MCF 10A (cell line): ENCODE measurements at regions of chr6 and their contacts with region 1.

Region 1: DNA sequence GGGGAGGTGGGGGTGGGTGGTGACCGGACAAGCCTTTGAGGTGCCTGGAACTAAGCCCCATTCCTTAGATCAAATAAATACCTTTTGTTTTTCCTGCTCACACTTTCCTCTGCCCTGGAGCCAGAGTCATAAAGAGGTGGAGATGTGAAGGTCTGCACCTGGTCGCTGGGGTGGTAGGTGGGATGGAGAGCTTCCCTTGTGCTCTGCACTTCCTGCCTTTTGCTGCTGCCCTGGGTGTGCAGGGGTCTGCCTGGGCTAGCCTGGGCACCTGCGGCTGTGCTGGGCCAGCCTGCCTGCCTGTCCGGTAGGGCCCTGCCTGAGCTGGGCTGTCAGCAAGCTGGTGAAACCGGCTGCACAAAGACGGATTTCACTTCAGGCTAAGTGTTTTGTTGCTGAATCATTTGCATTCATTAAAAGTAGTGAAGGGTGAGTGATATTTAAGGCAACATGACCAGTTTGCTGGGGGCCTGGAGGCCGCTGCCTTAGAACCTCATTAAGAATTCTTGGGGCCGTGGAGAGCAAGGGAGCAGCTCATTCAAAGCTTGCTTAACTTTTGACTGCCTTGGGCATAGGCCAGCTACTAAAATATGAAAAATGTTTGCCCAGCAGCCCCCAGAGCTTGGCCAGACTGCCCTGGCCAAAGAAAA is 20.5 kb downstream of the PTK7 start:
- DNase-seq: peak; percentile 83
- H3K4me3 Mint-ChIP-seq: peak overlapping the region; percentile 55
- H3K27ac Mint-ChIP-seq: peak overlapping the region; percentile 92
- H3K4me1 Mint-ChIP-seq: peaks cover 31% of the 10 kb centered on the region
- H3K27me3 Mint-ChIP-seq: no peaks in the 10 kb centered on the region
- CTCF ChIP-seq: no peak

Region 2: DNA sequence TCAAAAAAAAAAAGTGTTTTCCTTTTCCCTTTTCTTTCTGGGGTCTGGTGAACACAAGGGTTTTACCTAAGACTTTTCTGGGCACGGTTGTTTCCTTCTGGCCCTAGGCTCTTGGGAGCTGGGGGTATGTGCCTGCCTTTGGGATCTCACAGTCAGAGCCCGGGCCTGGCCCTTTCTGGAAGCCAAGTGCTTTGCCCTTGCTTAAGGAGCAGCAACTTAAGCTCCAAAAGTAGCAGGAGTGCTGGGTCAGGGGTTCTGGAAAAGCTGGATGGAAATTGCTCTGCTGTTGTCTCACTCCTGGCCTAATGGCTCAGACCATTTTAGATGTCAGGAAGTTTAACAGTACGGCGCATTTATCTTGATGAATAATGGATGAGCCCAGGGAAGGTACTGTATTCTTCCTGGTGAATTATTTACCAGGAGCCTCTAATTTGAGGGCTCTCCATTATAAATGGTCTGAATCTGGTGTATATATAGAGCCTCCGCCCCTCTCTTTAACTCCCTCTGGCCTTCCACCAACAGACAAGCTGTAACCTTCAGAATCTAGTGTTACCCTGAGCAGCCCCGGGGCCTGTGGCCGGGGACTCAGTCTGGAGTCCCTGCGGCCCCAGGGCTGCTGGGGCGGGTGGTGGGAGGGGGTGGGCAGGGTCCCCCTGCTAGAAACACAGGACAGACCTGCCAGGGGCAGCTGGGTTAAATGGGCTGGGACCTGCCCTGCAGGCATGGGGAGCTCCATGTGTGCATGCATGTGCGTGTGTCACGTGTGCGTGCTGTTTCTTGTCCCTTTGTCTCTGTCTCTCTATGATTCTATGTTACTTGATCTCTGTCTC is 17.1 kb after region 1 on chr6:
- CTCF ChIA-PET with region 1: no interaction called
- POLR2A ChIA-PET with region 1: interaction called, 44 read pairs
- intact Hi-C with region 1: no loop called
- DNase-seq: no peak
- H3K4me3 Mint-ChIP-seq: no peak overlapping the region
- H3K27ac Mint-ChIP-seq: no peak overlapping the region
- H3K4me1 Mint-ChIP-seq: peaks cover 22% of the 10 kb centered on the region
- H3K27me3 Mint-ChIP-seq: no peaks in the 10 kb centered on the region
- CTCF ChIP-seq: no peak

Region 3: DNA sequence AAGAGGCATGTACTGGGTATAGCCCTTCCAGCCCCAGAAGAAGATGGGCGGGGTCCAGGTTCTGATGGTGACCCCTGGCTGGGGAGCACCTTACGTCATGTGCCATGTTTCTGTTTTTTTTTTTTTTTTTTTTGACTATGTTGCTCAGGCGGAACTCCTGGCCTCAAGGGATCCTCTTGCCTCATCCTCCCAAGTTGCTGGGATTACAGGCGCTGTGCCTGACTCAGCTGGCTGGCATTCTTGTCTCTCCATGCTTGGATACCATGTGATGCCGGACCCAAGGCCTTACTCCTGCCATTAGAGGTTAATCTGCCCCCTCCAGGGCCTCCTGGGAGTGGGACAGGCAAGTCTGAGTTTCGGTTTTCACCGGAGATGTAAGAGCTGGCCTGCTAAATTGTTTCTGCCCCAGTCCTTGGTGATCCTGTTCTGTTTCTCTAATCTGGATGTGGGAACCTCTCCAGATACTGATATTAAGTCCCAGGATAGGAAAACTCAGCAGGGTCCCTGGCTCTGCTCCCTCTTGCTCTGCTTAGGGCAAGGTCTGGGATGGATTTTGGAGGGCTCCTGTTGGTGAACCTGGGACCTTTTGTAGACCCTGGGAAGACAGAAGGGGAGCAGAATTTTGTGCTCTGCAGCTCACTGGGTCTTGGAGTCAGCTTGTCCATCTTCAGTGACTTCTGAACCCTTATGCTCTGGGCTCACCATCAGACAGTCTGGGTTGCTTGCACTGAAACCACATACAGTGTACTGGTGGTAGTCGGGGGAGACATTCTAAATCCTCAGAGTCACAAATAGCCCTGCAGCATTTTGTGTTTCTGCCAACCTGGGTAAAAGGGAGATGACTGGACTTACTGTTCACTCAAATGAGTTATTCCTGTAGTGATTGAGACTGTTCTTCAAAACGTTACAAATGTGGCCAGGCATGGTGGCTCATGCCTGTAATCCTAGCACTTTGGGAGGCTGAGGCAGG is 24.7 kb after region 1 on chr6:
- CTCF ChIA-PET with region 1: interaction called, 3 read pairs
- POLR2A ChIA-PET with region 1: interaction called, 44 read pairs
- intact Hi-C with region 1: no loop called
- DNase-seq: peak; percentile 97
- H3K4me3 Mint-ChIP-seq: no peak overlapping the region
- H3K27ac Mint-ChIP-seq: peak overlapping the region; percentile 73
- H3K4me1 Mint-ChIP-seq: peaks cover 36% of the 10 kb centered on the region
- H3K27me3 Mint-ChIP-seq: no peaks in the 10 kb centered on the region
- CTCF ChIP-seq: no peak